ENCODE measurements at regions of chr4 and their contacts with region 1.

Region 1: GRCh38 chr4:152735396-152735859 is 44.1 kb downstream of the TIGD4 start:
- DNase-seq: no peak

Region 2: GRCh38 chr4:152408514-152409327 is 326.7 kb before region 1 on chr4:
- intact Hi-C with region 1: loop called (anchors 5 kb)
- DNase-seq: no peak

Region 3: DNA sequence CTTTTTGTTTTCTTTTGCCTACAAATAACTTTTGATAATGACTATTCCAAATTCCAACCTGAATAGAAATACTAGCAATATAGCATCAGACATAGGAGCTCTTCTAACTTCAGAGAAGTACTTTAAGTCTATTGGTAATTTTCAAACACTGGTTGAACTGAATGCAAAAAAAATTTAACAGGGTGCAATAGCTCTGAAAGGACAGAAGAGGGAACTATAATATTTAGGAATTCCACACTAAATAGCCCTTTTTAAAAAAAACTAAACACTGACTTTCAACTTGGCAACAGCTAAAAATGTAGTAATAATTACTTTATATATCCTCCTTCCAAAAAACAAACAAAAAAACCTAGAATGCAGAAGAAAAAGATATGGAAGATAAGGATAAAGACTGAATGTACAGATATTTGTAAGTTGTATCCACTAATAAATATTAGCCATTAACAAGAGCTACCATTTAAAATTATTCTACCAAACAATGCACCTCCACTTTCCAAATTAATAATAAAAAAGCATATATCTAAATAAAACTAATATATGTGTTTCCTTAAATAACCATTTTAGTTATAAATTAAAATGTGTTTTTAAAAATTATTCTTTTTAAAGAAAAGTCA is 280.9 kb before region 1 on chr4:
- intact Hi-C with region 1: loop called (anchors 5 kb)
- DNase-seq: no peak

Region 4: GRCh38 chr4:152500800-152501434 is 234.5 kb before region 1 on chr4:
- intact Hi-C with region 1: loop called (anchors 2 kb)
- DNase-seq: no peak

Region 5: GRCh38 chr4:152618971-152619370 is 116.5 kb before region 1 on chr4:
- intact Hi-C with region 1: no loop called
- DNase-seq: no peak

Region 6: GRCh38 chr4:152646221-152646620 is 89.2 kb before region 1 on chr4:
- intact Hi-C with region 1: loop called (anchors 5 kb)
- DNase-seq: no peak